ENCODE measurements at regions of chr21 and their contacts with region 1.

Region 1: DNA sequence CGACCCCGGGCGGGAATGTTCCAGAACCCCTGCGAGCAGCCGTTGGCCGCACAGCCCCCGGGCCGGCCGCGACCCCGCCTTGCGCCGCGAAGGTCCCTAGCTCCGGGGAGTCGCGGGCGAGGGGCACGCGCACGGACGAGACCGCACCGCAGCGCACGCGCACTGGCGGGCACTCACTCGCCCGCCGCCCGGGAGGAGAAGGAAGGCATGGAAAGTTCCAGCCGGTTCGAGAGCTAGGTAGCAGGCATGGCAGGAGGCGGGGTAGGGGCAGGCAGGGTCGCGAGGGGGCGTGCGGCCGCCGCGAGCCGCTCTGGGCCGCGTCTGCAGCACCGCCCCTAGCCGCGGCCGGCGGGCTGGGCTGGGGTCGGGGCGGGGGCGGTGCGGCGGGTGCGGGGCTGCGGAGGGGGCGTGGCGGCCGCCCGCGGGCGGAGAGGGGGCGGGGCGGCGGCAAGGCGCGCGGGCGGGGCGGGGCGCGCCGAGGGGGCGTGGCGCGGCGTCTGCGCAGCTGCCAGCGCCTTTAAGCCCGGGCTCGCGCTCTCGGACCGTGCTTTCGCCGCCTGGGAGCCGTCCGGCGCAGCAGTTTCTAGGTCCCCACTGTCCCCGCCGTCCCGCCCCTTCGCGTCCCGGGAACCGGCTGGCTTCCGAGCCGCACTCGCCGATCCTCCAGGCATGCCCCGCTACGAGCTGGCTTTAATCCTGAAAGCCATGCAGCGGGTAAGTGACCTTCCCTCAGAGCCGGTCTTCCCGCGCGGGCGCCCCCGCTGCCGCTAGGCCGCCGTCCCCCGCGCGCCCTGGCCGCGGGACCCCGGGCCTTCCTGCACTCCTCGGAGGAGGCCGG is at the starts of genes MRPS6 and SLC5A3:
- DNase-seq: peak; percentile 75
- H3K4me3 Mint-ChIP-seq: peak within 1 kb of the TSS; percentile 91
- H3K27ac Mint-ChIP-seq: peak within 1 kb of the TSS; percentile 93
- H3K4me1 Mint-ChIP-seq: peaks cover 36% of the 10 kb centered on the region
- H3K27me3 Mint-ChIP-seq: no peaks in the 10 kb centered on the region
- CTCF ChIP-seq: no peak
- total RNA-seq, gene MRPS6: 86.0 and 90.7 TPM in 2 replicates
- total RNA-seq, gene SLC5A3: 8.1 and 8.5 TPM in 2 replicates

Region 2: DNA sequence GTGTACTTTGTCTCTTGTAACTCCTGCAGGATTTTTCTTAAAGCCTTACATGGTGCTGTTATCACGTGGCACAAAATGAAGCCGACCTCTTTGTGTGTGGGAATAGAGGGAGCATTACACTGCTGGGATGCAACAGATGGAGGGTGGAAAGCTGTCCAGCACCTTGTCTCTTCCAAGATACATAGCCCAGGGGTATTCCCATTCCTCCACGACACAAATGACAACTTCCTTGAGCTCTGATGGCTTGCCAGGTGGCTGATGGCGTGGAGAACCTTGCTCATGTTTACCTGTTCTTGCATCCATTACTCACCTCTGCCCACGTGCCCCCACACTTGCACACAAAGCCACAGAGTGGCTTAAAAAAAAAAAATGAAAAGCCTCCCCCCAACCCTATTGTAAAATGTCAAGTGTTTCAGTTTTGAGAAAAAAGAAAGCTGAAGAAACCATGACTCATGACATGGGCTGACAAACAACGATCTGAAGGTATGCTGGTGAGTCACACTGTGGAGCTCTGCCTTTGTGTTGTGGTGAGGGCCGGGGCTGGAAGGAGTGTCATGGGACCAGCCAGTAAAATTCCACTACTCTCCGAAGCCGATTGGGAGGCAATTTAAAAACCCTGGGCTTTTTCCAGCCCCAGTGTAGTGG is 125.7 kb before region 1 on chr21:
- CTCF ChIA-PET with region 1: interaction called, 3 read pairs
- POLR2A ChIA-PET with region 1: interaction called, 45 read pairs
- intact Hi-C with region 1: loop called (anchors 1 kb)
- DNase-seq: peak; percentile 98
- H3K4me3 Mint-ChIP-seq: peak overlapping the region; percentile 74
- H3K27ac Mint-ChIP-seq: peak overlapping the region; percentile 96
- H3K4me1 Mint-ChIP-seq: peaks cover 36% of the 10 kb centered on the region
- H3K27me3 Mint-ChIP-seq: no peaks in the 10 kb centered on the region
- CTCF ChIP-seq: no peak

Region 3: GRCh38 chr21:33976082-33977016 is 96.9 kb before region 1 on chr21:
- CTCF ChIA-PET with region 1: no interaction called
- POLR2A ChIA-PET with region 1: interaction called, 38 read pairs
- intact Hi-C with region 1: loop called (anchors 2 kb)
- DNase-seq: peak; percentile 92
- H3K4me3 Mint-ChIP-seq: peak overlapping the region; percentile 60
- H3K27ac Mint-ChIP-seq: peak overlapping the region; percentile 98
- H3K4me1 Mint-ChIP-seq: peaks cover 41% of the 10 kb centered on the region
- H3K27me3 Mint-ChIP-seq: no peaks in the 10 kb centered on the region
- CTCF ChIP-seq: no peak

Region 4: GRCh38 chr21:34054259-34054658 is 19.0 kb before region 1 on chr21:
- CTCF ChIA-PET with region 1: no interaction called
- POLR2A ChIA-PET with region 1: no interaction called
- intact Hi-C with region 1: no loop called
- DNase-seq: no peak
- H3K4me3 Mint-ChIP-seq: no peak overlapping the region
- H3K27ac Mint-ChIP-seq: no peak overlapping the region
- H3K4me1 Mint-ChIP-seq: no peaks in the 10 kb centered on the region
- H3K27me3 Mint-ChIP-seq: no peaks in the 10 kb centered on the region
- CTCF ChIP-seq: no peak

Region 5: GRCh38 chr21:34091607-34092006 is 18.4 kb after region 1 on chr21:
- CTCF ChIA-PET with region 1: interaction called, 3 read pairs
- POLR2A ChIA-PET with region 1: interaction called, 43 read pairs
- intact Hi-C with region 1: no loop called
- DNase-seq: no peak
- H3K4me3 Mint-ChIP-seq: no peak overlapping the region
- H3K27ac Mint-ChIP-seq: no peak overlapping the region
- H3K4me1 Mint-ChIP-seq: no peaks in the 10 kb centered on the region
- H3K27me3 Mint-ChIP-seq: no peaks in the 10 kb centered on the region
- CTCF ChIP-seq: peak; percentile 36

Measured in MCF 10A (cell line).